ENCODE measurements at regions of chr4 and their contacts with region 1.

Region 1: DNA sequence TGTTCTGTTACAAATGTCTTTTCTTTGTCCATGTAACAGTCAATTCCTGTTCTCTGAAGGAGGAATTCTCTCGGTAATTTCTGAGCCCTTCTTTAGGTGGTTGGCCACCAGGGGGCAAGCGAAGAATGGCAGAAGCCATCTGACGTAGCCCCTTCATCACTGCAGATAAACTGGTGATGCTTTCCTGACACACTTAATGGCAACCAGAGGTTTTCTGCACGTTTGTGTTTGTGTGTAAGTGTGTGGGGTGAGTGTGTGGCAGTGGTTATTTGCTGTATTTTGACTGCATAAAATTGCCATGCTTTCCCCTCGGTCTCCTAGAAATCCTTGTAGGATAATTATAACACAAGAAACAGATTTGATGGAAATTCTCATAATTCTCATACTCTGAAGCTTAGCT is 64.8 kb upstream of the STOX2 start:
- DNase-seq: no peak
- H3K4me3 ChIP-seq: no peak overlapping the region
- H3K27ac ChIP-seq: no peak overlapping the region
- H3K4me1 ChIP-seq: peaks cover 0 to 6% (median 0%) of the 10 kb centered on the region in 4 donors
- H3K27me3 ChIP-seq: peaks cover 0 to 11% (median 0%) of the 10 kb centered on the region in 4 donors
- CTCF ChIP-seq: peak; percentile 84 to 89 (median 89)
- EP300 ChIP-seq: no peak
- POLR2A ChIP-seq: no peak

Region 2: GRCh38 chr4:183321079-183321478 is 519.2 kb before region 1 on chr4:
- intact Hi-C with region 1: no loop called
- DNase-seq: no peak
- H3K4me3 ChIP-seq: no peak overlapping the region
- H3K27ac ChIP-seq: no peak overlapping the region
- H3K4me1 ChIP-seq: peaks cover 0 to 8% (median 0%) of the 10 kb centered on the region in 4 donors
- H3K27me3 ChIP-seq: no peaks in the 10 kb centered on the region
- CTCF ChIP-seq: no peak
- EP300 ChIP-seq: no peak
- POLR2A ChIP-seq: no peak

Region 3: GRCh38 chr4:183783991-183784553 is 56.2 kb before region 1 on chr4:
- intact Hi-C with region 1: no loop called
- DNase-seq: no peak
- H3K4me3 ChIP-seq: no peak overlapping the region
- H3K27ac ChIP-seq: peak overlapping the region in 2 of 4 donors; percentile 42 to 44
- H3K4me1 ChIP-seq: peaks cover 0 to 12% (median 5%) of the 10 kb centered on the region in 4 donors
- H3K27me3 ChIP-seq: peaks cover 0 to 4% (median 0%) of the 10 kb centered on the region in 4 donors
- CTCF ChIP-seq: no peak
- EP300 ChIP-seq: no peak
- POLR2A ChIP-seq: no peak

Region 4: DNA sequence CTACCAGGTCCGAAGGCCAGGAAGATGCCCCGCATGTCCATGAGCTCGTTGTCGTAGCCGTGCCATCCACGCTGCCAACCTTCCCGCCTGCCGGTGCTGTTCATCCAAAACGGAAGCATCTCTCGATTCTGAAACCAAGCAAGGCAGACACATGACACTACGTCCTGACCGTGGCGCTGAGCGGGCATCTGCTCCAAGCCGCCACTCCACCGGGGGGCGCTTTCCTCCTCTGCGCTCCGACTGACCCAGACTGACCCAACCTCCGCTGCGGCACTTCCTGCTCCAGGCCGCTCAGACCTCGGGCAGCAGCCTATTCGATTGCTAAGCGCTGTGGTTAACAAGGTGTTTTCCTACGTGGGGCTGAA is 256.9 kb after region 1 on chr4:
- intact Hi-C with region 1: loop called (anchors 1 kb)
- DNase-seq: no peak
- H3K4me3 ChIP-seq: peak overlapping the region; percentile 38 to 54 (median 40)
- H3K27ac ChIP-seq: peak overlapping the region in 1 of 4 donors; percentile 55
- H3K4me1 ChIP-seq: peaks cover 0 to 39% (median 36%) of the 10 kb centered on the region in 4 donors
- H3K27me3 ChIP-seq: no peaks in the 10 kb centered on the region
- CTCF ChIP-seq: peak in 2 of 3 experiments; percentile 31 to 41
- EP300 ChIP-seq: no peak
- POLR2A ChIP-seq: no peak

Region 5: DNA sequence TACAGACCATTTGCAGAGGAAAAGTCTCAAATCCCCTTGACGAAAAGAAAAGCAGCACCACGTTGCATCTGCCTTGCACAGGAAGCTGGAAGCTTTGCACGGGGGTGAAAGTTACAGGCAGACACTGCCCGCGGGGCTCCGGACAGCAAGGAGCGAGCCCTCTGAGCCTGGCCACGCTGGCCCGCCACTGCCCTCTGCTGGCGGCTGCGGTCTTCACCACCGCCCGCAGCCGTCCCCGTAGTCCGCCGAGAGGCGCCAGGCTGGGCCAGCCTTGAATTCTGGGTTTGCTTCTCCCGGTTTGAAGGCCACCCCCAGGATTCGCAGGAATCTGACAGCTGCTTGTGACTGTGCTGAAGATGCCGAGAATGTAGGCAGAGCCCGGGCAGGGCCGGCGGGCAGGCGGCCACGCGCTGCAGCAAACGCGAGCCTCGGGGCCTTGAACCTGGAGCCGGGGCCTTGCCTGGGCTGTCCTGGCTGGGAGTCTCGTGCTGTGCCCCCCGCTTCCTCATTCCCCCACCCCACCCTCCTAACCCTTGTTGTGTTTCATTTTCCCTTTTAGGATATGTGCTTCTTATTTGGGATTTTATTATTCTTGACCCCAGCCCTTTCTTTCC is 328.2 kb after region 1 on chr4:
- intact Hi-C with region 1: loop called (anchors 1 kb)
- DNase-seq: peak; percentile 91
- H3K4me3 ChIP-seq: peak overlapping the region in 1 of 4 donors; percentile 38
- H3K27ac ChIP-seq: no peak overlapping the region
- H3K4me1 ChIP-seq: peaks cover 7 to 10% (median 9%) of the 10 kb centered on the region in 4 donors
- H3K27me3 ChIP-seq: peaks cover 0 to 21% (median 0%) of the 10 kb centered on the region in 4 donors
- CTCF ChIP-seq: peak in 2 of 3 experiments; percentile 83 to 97
- EP300 ChIP-seq: no peak
- POLR2A ChIP-seq: no peak